Stomach (tissue), 19 donors: ENCODE measurements at regions of chr1 and their contacts with region 1.

Region 1: GRCh38 chr1:3618881-3619671 is 5.7 kb upstream of the TPRG1L start:
- DNase-seq: peak; percentile 79 to 93
- H3K4me3 ChIP-seq: no peak overlapping the region
- H3K27ac ChIP-seq: no peak overlapping the region
- H3K4me1 ChIP-seq: peaks cover 11 to 47% (median 26%) of the 10 kb centered on the region in 4 donors
- H3K27me3 ChIP-seq: no peaks in the 10 kb centered on the region
- CTCF ChIP-seq: peak in 5 of 7 experiments; percentile 73 to 84 (median 82)
- EP300 ChIP-seq: no peak
- POLR2A ChIP-seq: no peak

Region 2: DNA sequence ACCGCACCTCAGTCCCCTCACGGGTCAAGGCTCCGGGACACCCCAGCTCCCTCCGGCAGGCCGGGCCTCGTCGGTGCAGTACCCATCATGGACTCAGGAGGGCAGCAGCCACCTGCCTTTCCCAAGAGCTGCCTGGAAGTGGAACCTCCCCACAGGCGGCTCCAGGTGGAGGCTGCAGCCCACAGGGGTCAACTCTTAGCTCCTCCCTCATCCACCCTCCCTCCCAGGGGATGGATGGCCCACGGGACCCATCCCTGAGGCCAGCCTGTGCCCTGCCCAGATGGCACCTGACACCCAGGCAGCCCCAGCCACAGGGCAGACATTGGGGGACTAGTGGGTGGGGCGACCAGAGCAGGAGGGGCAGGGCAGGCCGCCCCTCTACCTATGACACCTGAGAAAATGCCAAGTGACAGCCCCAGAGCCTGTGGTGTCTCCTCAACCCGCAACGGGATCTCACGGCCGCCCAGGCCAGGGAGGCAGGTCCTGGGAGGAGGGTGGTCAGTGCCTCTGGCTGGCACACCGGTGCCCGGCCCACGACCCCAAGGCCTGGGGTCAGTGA is 165.8 kb before region 1 on chr1:
- intact Hi-C with region 1: no loop called
- DNase-seq: peak; percentile 88 to 93
- H3K4me3 ChIP-seq: no peak overlapping the region
- H3K27ac ChIP-seq: peak overlapping the region; percentile 73 to 93 (median 92)
- H3K4me1 ChIP-seq: peaks cover 38 to 54% (median 52%) of the 10 kb centered on the region in 4 donors
- H3K27me3 ChIP-seq: peaks cover 4 to 65% (median 33%) of the 10 kb centered on the region in 3 donors
- CTCF ChIP-seq: peak in 5 of 7 experiments; percentile 87 to 97 (median 92)
- EP300 ChIP-seq: no peak
- POLR2A ChIP-seq: no peak

Region 3: DNA sequence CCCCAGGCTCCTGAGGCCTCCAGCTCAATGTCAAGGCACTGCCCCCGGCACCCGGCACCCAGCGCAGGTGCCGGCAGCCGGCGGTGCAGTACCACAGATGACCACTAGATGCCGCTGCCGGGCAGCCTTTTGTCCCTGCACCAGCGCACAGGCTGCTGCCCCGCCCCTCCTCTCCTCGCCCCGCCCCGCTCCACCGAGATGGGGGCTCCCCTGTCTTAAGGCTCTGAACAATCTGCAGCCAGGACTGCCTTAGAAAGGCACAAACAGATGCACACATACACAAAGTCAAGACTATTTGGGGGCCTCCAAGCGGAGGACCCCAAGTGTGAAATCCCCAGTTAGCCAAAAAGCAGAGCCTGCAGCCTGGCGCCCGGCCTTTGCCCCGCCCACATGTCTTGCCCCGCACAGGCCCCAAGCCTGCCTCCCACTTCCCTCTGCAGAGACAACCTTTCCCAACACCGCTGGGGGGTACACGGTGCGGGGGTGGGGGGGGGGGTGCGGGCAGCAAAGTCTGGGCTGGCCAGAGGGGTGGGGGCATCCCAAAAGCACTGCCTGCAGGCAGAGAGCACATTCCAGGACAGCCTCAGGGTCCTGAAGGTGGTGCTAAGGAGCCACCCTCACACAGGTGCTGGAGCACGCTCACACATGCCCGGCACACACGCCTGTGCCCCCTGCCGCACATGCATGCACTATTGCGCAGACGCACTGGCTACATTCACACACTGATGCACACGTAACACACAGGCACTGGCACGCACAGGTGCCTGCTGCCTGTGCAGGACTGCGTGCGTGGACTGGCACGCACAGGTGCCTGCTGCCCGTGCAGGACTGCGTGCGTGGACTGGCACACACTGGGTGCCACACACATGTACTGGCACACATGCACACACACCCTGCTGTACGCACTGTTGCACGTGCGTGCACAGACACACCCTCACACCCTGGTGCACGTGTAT is 127.5 kb before region 1 on chr1:
- intact Hi-C with region 1: loop called (anchors 5 kb)
- DNase-seq: peak; percentile 83 to 91
- H3K4me3 ChIP-seq: peak overlapping the region in 3 of 4 donors; percentile 15 to 24 (median 19)
- H3K27ac ChIP-seq: no peak overlapping the region
- H3K4me1 ChIP-seq: peaks cover 4 to 14% (median 12%) of the 10 kb centered on the region in 4 donors
- H3K27me3 ChIP-seq: no peaks in the 10 kb centered on the region
- CTCF ChIP-seq: peak in 6 of 7 experiments; percentile 96 to 100 (median 98)
- EP300 ChIP-seq: no peak
- POLR2A ChIP-seq: no peak

Region 4: GRCh38 chr1:3564921-3565827 is 53.9 kb before region 1 on chr1:
- intact Hi-C with region 1: loop called (anchors 5 kb)
- DNase-seq: peak; percentile 40 to 70
- H3K4me3 ChIP-seq: no peak overlapping the region
- H3K27ac ChIP-seq: no peak overlapping the region
- H3K4me1 ChIP-seq: no peaks in the 10 kb centered on the region
- H3K27me3 ChIP-seq: peaks cover 0 to 21% (median 0%) of the 10 kb centered on the region in 3 donors
- CTCF ChIP-seq: peak in 5 of 7 experiments; percentile 72 to 87 (median 85)
- EP300 ChIP-seq: no peak
- POLR2A ChIP-seq: no peak

Region 5: DNA sequence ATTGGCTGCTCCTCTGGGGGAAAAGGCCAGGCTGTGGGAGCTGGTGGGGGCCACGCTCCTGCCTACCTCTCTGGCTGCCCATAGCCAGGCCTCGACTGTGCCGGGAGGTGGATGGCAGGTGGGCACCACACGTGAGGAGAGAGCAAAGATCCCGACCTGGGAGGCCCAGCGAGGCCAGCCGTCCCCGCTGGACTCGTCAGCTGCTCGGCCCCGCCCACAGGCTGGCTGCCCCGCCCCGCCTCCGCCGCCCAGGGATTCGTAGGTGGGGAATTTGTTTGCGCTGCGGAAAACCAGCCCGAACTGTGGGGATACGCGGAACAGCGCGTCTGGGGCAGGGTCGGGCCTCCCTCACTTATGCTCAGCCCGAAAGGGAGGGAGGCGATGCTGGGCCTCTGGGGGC is 64.9 kb after region 1 on chr1:
- intact Hi-C with region 1: no loop called
- DNase-seq: peak; percentile 47 to 74
- H3K4me3 ChIP-seq: peak overlapping the region in 1 of 4 donors; percentile 8
- H3K27ac ChIP-seq: no peak overlapping the region
- H3K4me1 ChIP-seq: peaks cover 4 to 9% (median 6%) of the 10 kb centered on the region in 4 donors
- H3K27me3 ChIP-seq: peaks cover 0 to 72% (median 13%) of the 10 kb centered on the region in 3 donors
- CTCF ChIP-seq: no peak
- EP300 ChIP-seq: no peak
- POLR2A ChIP-seq: no peak